ENCODE measurements at regions of chr18 and their contacts with region 1.

Region 1: DNA sequence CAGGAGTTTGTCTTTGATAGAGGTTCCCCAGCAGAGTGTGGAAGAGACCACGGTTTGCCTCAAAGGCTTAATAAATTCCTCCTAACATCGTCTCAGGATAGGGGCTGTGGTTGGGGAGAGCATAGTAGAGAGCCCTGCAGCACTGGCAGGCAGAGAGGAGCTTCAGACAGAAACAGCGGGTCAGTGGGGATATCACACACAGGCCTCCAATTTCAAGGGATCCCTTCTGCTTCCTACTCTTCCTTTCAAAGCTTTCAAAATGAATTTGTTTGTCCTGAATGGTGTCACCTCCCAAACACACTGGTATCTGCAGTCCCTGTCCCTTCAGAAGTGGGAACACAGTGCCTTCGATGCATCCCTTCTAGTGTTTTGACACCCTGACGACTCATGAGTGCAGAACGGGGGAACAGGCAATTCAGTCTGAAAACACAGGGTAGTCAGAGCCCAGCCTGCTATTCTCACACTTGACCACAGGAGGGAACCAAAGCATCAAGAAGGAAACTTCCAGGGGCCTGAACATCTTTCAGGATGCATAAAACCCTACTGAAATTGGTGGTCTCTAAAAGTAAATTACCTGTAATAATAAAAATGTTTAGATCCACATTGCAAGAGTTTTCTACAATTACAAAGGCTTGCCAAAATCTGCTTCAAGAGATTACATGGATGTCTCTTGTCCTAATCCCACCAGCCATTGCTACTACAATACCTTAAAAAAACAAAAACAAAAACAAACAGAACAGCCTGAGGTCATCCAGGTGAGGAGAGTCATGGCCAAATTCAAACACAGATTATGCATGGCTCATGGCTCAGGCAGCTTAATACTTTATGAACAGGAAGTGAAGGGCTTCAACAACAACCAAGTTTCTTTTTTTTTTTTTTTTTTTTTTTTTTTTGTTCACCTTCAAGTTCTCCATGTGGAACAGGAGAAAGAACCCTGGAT is 49.8 kb downstream of the SLC14A2 start:
- DNase-seq: peak; percentile 69 to 84 (median 77)
- H3K4me3 ChIP-seq: no peak overlapping the region
- H3K27ac ChIP-seq: no peak overlapping the region
- H3K4me1 ChIP-seq: peaks cover 24 to 48% (median 37%) of the 10 kb centered on the region in 4 experiments
- H3K27me3 ChIP-seq: no peaks in the 10 kb centered on the region

Region 2: DNA sequence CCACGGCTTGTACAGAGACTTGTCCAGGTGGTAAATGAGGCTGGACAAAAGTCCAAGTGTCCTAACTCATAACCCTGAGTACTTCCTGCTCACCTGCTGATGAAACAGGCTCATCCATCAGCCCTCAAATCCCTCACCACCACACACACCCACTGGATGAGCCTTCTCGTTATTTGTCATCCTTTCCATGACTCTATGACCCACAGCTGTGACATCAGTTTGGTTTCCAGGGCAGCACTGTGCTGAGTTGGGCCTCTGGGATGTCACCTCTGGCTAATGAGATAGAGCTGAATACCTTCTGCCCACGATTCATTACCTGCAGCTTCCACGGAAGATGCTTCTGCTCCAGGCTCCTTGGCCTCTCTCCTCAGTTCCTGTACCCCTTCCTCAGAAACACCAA is 10.4 kb before region 1 on chr18:
- CTCF ChIA-PET with region 1: interaction called, 22 read pairs
- POLR2A ChIA-PET with region 1: no interaction called
- DNase-seq: no peak
- H3K4me3 ChIP-seq: no peak overlapping the region
- H3K27ac ChIP-seq: no peak overlapping the region
- H3K4me1 ChIP-seq: peaks cover 0 to 14% (median 3%) of the 10 kb centered on the region in 4 experiments
- H3K27me3 ChIP-seq: no peaks in the 10 kb centered on the region

Region 3: DNA sequence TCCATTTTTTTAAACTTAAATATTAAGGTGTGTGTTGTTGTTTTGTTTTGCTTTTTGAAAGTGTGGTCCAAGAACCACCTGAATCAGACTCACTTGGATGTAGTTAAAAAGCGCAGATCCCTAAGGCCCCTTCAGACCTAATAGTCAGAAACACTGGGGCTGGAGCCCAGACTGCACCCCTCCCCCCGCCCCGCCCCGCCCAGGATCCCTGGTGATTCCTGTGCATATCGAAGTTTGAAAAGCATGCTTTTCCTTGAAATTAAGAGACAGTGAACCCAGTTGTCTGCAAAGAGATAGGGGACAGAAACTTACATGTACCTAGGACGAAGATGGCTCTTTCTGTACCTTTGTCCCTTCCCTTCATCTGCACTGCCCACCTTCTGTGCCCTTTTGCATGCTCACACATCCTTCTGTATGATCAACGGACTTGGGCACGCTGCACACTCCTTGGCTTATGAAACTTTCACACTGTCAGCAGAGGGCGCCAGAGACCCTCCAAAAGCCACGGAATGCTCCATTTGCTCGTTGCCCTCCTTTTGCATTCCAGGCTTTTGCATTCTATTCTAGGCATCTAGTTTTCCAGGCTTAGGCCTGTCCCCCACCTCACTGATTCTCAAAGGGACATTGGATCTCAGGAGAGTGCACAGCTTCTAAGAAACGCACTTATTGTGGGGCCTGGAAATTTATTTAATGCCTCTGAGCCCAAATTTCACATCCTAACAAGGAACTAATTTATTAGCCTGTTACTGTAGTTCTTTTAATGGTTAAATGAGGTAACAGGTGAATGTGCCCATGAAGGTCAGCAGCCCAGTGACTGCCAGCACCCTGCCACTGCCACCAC is 26.1 kb after region 1 on chr18:
- CTCF ChIA-PET with region 1: interaction called, 325 read pairs
- POLR2A ChIA-PET with region 1: interaction called, 10 read pairs
- DNase-seq: peak; percentile 76 to 87 (median 81)
- H3K4me3 ChIP-seq: no peak overlapping the region
- H3K27ac ChIP-seq: no peak overlapping the region
- H3K4me1 ChIP-seq: peaks cover 20 to 37% (median 29%) of the 10 kb centered on the region in 4 experiments
- H3K27me3 ChIP-seq: no peaks in the 10 kb centered on the region

Region 4: DNA sequence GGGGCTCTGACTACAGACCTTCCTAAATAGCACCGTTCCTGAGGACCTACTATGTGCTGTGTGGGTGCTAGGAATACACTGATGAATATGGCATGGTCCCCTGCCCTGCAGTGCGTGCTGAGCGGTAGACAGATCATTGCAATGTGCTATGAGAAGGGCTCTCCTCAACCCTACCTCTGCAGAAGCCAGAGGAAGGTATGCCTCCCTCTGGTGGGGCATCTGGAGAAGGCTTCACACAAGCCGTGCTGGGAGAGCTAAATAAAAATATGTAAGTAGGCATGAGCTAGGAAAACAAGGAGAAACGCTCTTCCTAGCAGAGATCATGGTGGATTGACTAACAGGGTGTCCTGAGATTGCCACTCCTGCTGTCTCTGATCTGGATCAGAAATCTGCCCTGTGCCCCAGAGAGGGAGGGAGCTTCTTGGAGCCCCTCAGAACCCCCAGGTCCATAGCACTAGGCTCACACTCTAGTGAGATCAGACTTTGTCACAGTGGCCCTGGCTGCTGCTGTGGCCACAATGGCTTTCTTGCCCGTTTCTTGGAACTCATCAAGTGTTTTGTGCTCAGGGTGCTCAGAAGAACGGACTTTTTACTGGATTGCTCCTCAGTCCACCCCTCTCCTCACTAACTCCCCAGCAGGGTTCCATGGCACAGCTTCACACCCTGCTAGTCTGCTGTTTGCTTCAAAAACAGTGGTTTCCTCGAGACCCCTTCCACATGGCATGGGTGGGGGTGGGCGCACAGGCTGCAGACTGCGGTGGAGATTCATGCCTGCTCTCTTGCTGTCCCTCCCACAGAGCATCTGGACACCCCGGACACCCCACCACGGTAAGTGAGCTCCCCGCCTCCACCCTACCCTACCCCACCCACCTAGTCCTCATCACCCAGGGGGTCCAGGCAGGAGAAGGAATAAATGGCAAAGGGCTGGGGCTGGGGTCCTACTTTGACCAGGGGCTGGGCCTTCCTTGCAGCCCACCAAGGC is 174.6 kb after region 1 on chr18:
- CTCF ChIA-PET with region 1: interaction called, 27 read pairs
- POLR2A ChIA-PET with region 1: no interaction called
- DNase-seq: peak; percentile 81 to 90 (median 88)
- H3K4me3 ChIP-seq: no peak overlapping the region
- H3K27ac ChIP-seq: no peak overlapping the region
- H3K4me1 ChIP-seq: peaks cover 7 to 47% (median 42%) of the 10 kb centered on the region in 4 experiments
- H3K27me3 ChIP-seq: peaks cover 0 to 13% (median 2%) of the 10 kb centered on the region in 5 experiments

Region 5: DNA sequence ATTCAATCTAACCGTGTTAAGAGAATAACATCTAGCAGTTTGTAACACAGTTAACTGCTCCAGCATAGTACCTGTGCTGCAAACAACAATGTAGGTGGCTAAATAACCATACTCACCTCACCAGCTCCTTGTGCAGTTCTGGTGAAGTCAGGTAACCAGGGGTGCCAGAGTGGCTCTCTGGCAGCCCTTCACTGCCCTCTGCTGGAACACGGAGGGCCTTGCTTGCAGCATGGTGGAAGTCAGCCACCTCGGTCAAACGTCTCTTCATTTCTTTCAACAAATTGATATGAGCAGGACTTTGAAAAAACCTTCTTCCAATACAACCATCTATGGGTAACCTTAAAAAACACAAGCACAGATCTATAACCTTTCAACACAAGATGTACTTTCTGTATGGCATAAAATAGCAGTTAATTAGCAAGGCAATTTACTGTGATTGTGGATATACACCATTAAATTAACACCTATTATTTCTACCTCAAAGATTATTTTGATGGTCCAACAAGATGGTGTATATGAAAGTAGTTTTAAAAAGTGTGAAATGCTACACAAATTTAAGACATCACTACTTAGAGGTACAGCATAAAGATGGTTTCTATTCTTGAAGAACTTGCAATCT is 245.4 kb after region 1 on chr18:
- CTCF ChIA-PET with region 1: interaction called, 30 read pairs
- POLR2A ChIA-PET with region 1: no interaction called
- DNase-seq: peak; percentile 39 to 74 (median 69)
- H3K4me3 ChIP-seq: no peak overlapping the region
- H3K27ac ChIP-seq: no peak overlapping the region
- H3K4me1 ChIP-seq: no peaks in the 10 kb centered on the region
- H3K27me3 ChIP-seq: no peaks in the 10 kb centered on the region

Measured in common myeloid progenitor, CD34-positive (primary cell).